ENCODE measurements at regions of chr14 and their contacts with region 1.

Region 1: GRCh38 chr14:59490756-59491155 is 6.4 kb downstream of the JKAMP start:
- DNase-seq: no peak
- ATAC-seq: no peak
- H3K4me3 ChIP-seq: no peak overlapping the region
- H3K27ac ChIP-seq: no peak overlapping the region
- H3K4me1 ChIP-seq: peaks cover 5% of the 10 kb centered on the region; the same call in 1 of the 2 replicates
- H3K27me3 ChIP-seq: no peaks in the 10 kb centered on the region
- CTCF ChIP-seq: no peak

Region 2: GRCh38 chr14:60195179-60195810 is 704.5 kb after region 1 on chr14:
- CTCF ChIA-PET with region 1: no interaction called
- POLR2A ChIA-PET with region 1: no interaction called
- in situ Hi-C with region 1: no loop called
- intact Hi-C with region 1: loop called (anchors 10 kb)
- DNase-seq: no peak
- ATAC-seq: no peak
- H3K4me3 ChIP-seq: no peak overlapping the region
- H3K27ac ChIP-seq: no peak overlapping the region
- H3K4me1 ChIP-seq: no peaks in the 10 kb centered on the region
- H3K27me3 ChIP-seq: no peaks in the 10 kb centered on the region
- CTCF ChIP-seq: peak; percentile 28

Measured in Panc1 (cell line).